ENCODE measurements at regions of chr13 and their contacts with region 1.

Region 1: DNA sequence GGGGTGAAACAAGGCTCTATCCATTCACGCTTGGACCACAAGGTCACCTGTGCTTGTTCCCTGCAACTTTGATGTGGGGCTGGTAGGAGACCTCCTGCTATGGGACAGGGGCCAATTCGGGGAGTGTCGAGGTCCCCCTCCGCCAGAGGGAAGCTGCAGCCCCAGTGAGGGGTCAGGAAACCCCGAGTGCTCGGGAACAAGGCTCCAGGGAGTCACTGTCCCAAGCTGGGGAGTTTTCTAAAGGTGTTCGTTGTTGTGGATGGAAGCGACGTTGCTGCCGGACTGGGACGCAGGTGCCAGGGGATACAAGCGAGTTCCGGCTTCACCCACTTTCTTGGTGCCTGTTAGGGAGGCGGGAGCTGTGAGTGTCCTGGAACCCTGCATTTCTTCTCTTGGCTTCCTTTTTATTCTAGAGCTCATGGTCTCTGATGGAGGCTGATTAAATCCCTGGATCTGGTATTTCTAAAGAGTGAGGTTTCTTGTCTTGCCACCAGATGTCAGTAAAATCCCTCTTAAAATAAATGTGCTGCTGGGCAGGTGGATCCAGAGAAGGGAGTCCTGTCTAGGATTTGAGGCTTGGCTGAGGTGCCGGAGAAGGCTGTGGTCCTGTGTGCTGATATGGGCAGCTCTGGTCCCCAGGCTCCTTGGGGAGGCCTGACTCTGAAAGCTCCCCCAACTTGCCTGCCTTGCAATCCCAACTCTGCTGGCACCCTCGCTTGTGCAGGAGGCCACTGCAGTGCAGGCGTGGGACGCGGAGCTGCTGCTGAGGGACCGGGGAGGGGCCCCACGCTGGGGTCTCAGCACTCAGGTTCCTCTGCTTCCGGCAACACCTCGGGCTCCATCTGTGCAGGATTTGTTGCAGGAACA is 153.9 kb downstream of the TEX29 start:
- ATAC-seq: peak; percentile 78 to 92 (median 83)
- H3K4me3 ChIP-seq: no peak overlapping the region
- H3K27ac ChIP-seq: no peak overlapping the region
- H3K4me1 ChIP-seq: peaks cover 0 to 4% of the 10 kb centered on the region in 2 donors

Region 2: DNA sequence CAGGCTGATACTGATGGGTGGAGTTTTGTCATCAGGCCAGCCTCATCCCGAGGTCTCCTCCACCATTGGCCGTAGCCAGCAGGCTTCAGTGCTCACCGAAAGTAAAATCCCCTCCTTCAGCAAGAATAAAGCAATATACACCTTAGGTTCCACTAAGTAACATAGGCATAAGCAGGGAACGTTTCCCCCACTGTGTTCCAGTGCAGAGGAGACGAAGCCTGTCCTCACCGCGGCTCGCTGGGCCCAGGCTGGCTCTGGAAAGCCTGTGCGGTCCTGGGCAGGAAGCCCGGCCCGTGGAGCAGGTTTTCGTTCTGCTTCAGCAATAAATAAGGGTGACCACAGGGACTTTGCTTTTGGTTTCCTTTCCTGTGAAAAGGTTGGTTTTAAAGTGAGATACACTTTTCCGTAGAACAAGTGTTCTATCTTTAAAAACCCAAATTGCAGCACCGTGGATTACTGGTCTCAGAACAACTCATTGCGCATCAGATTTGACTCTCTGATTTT is 170.3 kb before region 1 on chr13:
- in situ Hi-C with region 1: no loop called
- ATAC-seq: peak in 1 of 8 experiments; percentile 23
- H3K4me3 ChIP-seq: no peak overlapping the region
- H3K27ac ChIP-seq: no peak overlapping the region
- H3K4me1 ChIP-seq: no peaks in the 10 kb centered on the region

Region 3: GRCh38 chr13:112392719-112393118 is 918.4 kb after region 1 on chr13:
- in situ Hi-C with region 1: no loop called
- ATAC-seq: no peak
- H3K4me3 ChIP-seq: no peak overlapping the region
- H3K27ac ChIP-seq: no peak overlapping the region
- H3K4me1 ChIP-seq: peaks cover 7 to 12% of the 10 kb centered on the region in 2 donors

Region 4: DNA sequence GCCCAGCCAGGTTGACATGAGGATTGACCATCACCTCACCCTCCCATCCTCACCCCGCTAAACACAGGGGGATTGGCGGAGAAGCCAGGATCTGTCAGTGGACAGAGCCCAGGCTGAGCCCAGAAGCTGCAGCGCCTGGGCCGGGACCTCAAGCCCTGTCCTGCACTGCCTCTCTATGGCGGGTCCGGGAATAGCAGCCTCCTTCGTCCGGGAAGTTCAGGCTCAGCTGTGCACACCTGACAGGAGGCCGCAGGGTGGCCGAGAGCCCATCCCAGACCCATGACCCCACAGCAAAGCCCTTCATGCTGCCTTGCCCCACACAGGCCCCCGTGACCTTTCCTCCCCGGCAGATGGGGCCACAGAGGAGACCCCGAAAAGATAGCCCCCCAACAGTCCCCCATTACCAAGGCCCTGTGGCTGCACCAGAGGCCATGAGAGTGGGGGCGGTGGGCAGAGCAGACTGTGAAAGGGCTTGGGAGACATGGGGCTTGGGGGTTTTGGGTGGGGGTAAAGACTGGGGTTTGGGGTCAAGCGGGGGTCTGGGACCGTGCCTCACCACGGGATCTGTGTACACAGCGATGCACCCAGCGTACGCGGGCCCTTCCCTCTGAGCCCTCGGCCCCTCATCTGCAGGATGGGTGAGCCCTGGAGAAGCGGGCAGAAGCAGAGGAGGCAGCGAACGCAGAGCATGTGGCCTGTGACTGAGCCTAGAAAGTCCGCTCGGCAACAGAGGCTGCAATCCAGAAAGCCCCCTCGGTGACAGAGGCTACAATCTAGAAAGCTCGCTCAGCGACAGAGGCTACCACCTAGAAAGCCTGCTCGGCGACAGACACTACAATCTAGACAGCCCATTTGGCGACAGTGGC is 969.9 kb after region 1 on chr13:
- in situ Hi-C with region 1: loop called (anchors 10 to 25 kb)
- ATAC-seq: peak; percentile 72 to 97 (median 94)
- H3K4me3 ChIP-seq: no peak overlapping the region
- H3K27ac ChIP-seq: no peak overlapping the region
- H3K4me1 ChIP-seq: peaks cover 0 to 14% of the 10 kb centered on the region in 2 donors

Region 5: DNA sequence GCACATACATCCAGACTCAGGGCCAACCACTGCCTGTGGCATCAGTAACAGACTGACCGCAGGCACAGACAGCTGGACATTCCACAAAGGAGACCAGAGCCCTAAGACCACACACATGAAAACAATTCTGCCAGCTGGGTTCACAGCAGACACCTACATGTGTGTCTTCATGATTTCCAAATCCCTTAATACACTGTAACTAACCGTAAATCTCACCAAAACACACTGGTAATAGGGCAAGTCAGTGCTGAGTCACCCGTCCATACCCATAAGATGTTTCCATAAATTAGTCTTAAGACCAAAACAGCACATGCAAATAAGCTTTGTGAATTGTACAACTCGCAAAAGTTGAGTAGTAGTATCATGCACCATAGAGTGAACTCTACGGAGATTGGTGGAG is 1048.2 kb after region 1 on chr13:
- in situ Hi-C with region 1: no loop called
- ATAC-seq: peak in 3 of 8 experiments; percentile 97
- H3K4me3 ChIP-seq: no peak overlapping the region
- H3K27ac ChIP-seq: no peak overlapping the region
- H3K4me1 ChIP-seq: no peaks in the 10 kb centered on the region

Region 6: GRCh38 chr13:112606109-112607001 is 1132.0 kb after region 1 on chr13:
- in situ Hi-C with region 1: loop called in 2 of 9 experiments (anchors 25 kb)
- ATAC-seq: peak; percentile 91 to 100 (median 99)
- H3K4me3 ChIP-seq: peak overlapping the region; percentile 24 to 36 (median 33)
- H3K27ac ChIP-seq: no peak overlapping the region
- H3K4me1 ChIP-seq: peaks cover 15 to 20% of the 10 kb centered on the region in 2 donors

Measured in motor neuron (in vitro differentiated cells).